Activated naive CD4-positive, alpha-beta T cell treated with anti-CD3 and anti-CD28 coated beads for 36 hours (primary cell): ENCODE measurements at regions of chr12 and their contacts with region 1.

Region 1: GRCh38 chr12:55715833-55716581 is at the start of gene BLOC1S1:
- DNase-seq: peak; percentile 96
- H3K4me3 Mint-ChIP-seq: peak within 1 kb of the TSS; percentile 92
- H3K27ac Mint-ChIP-seq: peak within 1 kb of the TSS; percentile 91
- H3K4me1 Mint-ChIP-seq: peaks cover 28% of the 10 kb centered on the region
- H3K27me3 Mint-ChIP-seq: peaks cover 3% of the 10 kb centered on the region
- total RNA-seq, gene BLOC1S1: 118 to 124 TPM

Region 2: GRCh38 chr12:55642669-55643068 is 73.3 kb before region 1 on chr12:
- CTCF ChIA-PET with region 1: no interaction called
- intact Hi-C with region 1: loop called (anchors 1 kb)
- DNase-seq: peak; percentile 67
- H3K4me3 Mint-ChIP-seq: no peak overlapping the region
- H3K27ac Mint-ChIP-seq: no peak overlapping the region
- H3K4me1 Mint-ChIP-seq: peaks cover 25% of the 10 kb centered on the region
- H3K27me3 Mint-ChIP-seq: peaks cover 2% of the 10 kb centered on the region

Region 3: GRCh38 chr12:55728939-55729823 is 13.2 kb after region 1 on chr12 and contains the start of gene CD63:
- CTCF ChIA-PET with region 1: interaction called, 10 read pairs
- intact Hi-C with region 1: loop called (anchors 1 kb)
- DNase-seq: peak; percentile 81
- H3K4me3 Mint-ChIP-seq: peak within 1 kb of the TSS; percentile 90
- H3K27ac Mint-ChIP-seq: peak within 1 kb of the TSS; percentile 87
- H3K4me1 Mint-ChIP-seq: peaks cover 29% of the 10 kb centered on the region
- H3K27me3 Mint-ChIP-seq: no peaks in the 10 kb centered on the region
- total RNA-seq, gene CD63: 62.3 to 73.6 TPM

Region 4: GRCh38 chr12:55748230-55748993 is 32.4 kb after region 1 on chr12:
- CTCF ChIA-PET with region 1: no interaction called
- intact Hi-C with region 1: no loop called
- DNase-seq: no peak
- H3K4me3 Mint-ChIP-seq: no peak overlapping the region
- H3K27ac Mint-ChIP-seq: peak overlapping the region; percentile 2
- H3K4me1 Mint-ChIP-seq: peaks cover 19% of the 10 kb centered on the region
- H3K27me3 Mint-ChIP-seq: no peaks in the 10 kb centered on the region